MCF 10A (cell line): ENCODE measurements at regions of chr6 and their contacts with region 1.

Region 1: DNA sequence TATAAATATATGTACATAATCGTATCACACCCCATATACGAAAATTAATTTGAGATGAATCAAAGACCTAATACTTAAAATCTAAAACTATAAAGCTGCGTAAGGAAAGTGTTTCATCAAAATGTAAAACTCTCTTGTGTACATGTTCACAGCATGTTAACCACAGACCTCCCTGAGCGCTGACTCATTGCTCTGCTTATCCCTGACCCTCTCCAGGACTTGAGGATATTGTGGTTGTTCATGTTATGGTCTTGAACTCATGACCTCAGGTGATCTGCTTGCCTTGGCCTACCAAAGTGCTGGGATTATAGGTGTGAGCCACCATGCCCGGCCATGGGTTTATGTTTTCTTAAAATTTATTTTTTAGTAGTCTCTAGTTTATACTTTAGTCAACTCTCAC is 14.2 kb downstream of the FAM83B start:
- DNase-seq: peak; percentile 78
- H3K4me3 Mint-ChIP-seq: no peak overlapping the region
- H3K27ac Mint-ChIP-seq: peak overlapping the region; percentile 63
- H3K4me1 Mint-ChIP-seq: peaks cover 7% of the 10 kb centered on the region
- H3K27me3 Mint-ChIP-seq: no peaks in the 10 kb centered on the region
- CTCF ChIP-seq: no peak

Region 2: DNA sequence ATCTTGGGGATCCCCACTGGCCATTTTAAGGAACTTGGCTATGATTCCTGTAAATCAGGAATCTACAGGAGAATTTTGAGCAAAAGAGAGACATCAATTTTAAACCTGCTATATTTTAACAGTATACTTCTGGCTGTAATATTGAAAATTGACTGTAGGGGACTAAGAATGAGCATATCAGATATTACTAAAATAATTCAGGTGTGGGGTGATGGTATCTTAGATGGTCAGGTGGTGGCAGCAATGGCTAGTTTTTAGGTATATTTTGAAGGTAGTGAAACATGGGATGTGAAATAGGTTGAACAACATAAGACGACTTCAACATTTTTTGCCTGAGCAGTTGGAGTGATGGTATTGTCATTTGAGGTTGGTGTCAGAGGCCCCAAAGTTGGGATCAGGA is 17.9 kb after region 1 on chr6:
- CTCF ChIA-PET with region 1: interaction called, 3 read pairs
- POLR2A ChIA-PET with region 1: interaction called, 20 read pairs
- intact Hi-C with region 1: no loop called
- DNase-seq: peak; percentile 20
- H3K4me3 Mint-ChIP-seq: no peak overlapping the region
- H3K27ac Mint-ChIP-seq: no peak overlapping the region
- H3K4me1 Mint-ChIP-seq: peaks cover 16% of the 10 kb centered on the region
- H3K27me3 Mint-ChIP-seq: no peaks in the 10 kb centered on the region
- CTCF ChIP-seq: peak; percentile 17